IMR-90 (cell line): ENCODE measurements at regions of chr1 and their contacts with region 1.

Region 1: GRCh38 chr1:230268366-230269170 is 157.6 kb downstream of the PGBD5 start:
- DNase-seq: peak; percentile 75
- ATAC-seq: peak; percentile 98
- H3K4me3 ChIP-seq: no peak overlapping the region
- H3K27ac ChIP-seq: no peak overlapping the region
- H3K4me1 ChIP-seq: peaks cover 3% of the 10 kb centered on the region; the same call in 1 of the 2 replicates
- H3K27me3 ChIP-seq: no peaks in the 10 kb centered on the region
- CTCF ChIP-seq: peak; percentile 84
- POLR2A ChIP-seq: no peak
- RAD21 ChIP-seq: peak; percentile 85

Region 2: DNA sequence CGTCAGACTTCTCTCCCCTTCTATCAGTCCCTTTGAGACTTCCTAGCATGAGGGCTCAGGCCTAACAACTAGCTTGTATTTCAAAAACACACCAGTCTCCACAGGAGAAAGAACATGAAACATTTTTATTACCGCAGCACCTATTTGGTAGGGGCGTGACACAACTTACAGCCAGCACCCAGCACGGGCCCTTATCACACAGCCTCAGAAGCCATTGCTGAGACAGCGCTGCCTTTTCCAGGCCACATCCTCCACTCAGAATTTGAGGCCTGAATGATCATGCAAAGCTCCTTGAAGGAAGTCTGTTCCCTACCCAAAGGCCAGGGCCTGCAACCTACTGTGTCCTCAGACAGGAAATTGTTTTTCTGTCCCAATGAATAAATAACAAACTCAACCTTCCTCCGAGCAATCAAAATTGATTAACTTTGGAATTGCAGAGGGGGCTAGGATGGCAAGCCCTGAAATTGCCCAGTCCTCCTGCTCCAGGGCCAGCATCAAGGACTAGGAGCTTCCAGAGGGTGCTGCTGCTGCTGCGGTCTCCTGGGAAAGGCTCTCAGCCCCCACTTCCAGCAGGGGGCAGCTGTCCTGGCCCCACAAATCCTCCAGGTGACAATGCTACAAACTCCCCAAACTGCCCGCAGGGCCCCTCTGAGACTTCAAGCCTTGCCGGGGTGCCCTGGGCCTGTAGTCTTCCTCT is 295.8 kb before region 1 on chr1:
- CTCF ChIA-PET with region 1: no interaction called
- POLR2A ChIA-PET with region 1: no interaction called
- dilution Hi-C with region 1: no loop called
- in situ Hi-C with region 1: no loop called
- intact Hi-C with region 1: loop called (anchors 10 kb)
- DNase-seq: no peak
- ATAC-seq: no peak
- H3K4me3 ChIP-seq: no peak overlapping the region
- H3K27ac ChIP-seq: no peak overlapping the region
- H3K4me1 ChIP-seq: no peaks in the 10 kb centered on the region
- H3K27me3 ChIP-seq: no peaks in the 10 kb centered on the region
- CTCF ChIP-seq: 0 out of 2 replicates have a peak, but pooled peaks have one; percentile 14
- POLR2A ChIP-seq: no peak
- RAD21 ChIP-seq: no peak